ENCODE measurements at regions of chr1 and their contacts with region 1.

Region 1: DNA sequence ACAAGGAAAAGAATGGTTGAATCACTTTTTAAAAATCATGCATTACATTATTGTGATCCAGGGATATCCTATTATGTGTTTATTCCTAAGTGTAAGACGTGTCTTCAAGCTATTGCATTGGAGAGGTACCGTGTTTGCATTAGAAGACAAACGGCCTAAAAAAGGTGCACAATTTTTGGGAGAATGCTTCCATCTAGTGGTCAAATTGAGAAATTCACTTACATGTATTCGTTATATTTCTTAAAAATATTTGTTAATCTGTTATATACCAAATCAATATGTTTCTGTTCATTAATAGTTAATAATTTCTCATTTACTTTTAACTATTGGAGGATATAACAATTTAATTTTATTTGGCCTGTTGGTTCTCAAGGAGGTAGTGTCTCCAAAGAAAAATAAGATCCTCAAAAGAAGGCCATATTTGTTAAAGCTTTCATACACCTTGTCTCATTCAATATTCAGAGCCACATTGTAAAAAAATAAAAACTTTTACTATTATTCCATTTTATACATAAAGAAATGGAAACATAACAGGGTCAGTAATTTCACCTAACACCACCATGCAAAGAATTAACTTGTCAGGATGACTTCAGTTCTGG is 40.5 kb upstream of the KCTD3 start:
- DNase-seq: peak; percentile 69
- ATAC-seq: peak; percentile 63; the same call in 1 of the 2 replicates
- H3K4me3 ChIP-seq: no peak overlapping the region
- H3K27ac ChIP-seq: no peak overlapping the region
- H3K4me1 ChIP-seq: peaks cover 3% of the 10 kb centered on the region
- H3K27me3 ChIP-seq: no peaks in the 10 kb centered on the region
- CTCF ChIP-seq: peak; percentile 70
- POLR2A ChIP-seq: no peak
- RAD21 ChIP-seq: peak; percentile 82

Region 2: DNA sequence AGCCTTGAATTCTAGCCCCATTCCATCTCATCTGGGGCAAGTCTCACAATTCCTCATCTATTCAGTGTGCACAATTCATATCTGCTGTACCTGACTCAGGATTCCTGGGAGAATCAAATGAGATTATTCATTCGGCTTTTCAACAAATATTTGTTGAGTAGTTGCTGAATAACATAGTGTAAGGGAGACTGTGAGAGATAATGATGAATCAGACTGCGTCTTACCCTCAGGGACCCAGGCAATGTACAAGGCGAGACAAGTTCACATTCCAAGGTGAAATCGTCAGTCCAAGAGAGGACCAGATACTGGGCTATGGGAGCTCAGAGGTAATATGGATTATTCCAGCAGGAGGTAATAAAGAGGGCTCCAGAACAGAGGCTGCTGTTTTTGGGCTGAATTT is 1313.5 kb before region 1 on chr1:
- CTCF ChIA-PET with region 1: interaction called, 3 read pairs
- POLR2A ChIA-PET with region 1: no interaction called
- dilution Hi-C with region 1: no loop called
- in situ Hi-C with region 1: no loop called
- intact Hi-C with region 1: loop called (anchors 5 kb)
- DNase-seq: peak; percentile 18
- ATAC-seq: peak; percentile 48
- H3K4me3 ChIP-seq: no peak overlapping the region
- H3K27ac ChIP-seq: no peak overlapping the region
- H3K4me1 ChIP-seq: no peaks in the 10 kb centered on the region; the same call in 1 of the 2 replicates
- H3K27me3 ChIP-seq: peaks cover 38% of the 10 kb centered on the region
- CTCF ChIP-seq: no peak
- POLR2A ChIP-seq: no peak
- RAD21 ChIP-seq: no peak

Region 3: DNA sequence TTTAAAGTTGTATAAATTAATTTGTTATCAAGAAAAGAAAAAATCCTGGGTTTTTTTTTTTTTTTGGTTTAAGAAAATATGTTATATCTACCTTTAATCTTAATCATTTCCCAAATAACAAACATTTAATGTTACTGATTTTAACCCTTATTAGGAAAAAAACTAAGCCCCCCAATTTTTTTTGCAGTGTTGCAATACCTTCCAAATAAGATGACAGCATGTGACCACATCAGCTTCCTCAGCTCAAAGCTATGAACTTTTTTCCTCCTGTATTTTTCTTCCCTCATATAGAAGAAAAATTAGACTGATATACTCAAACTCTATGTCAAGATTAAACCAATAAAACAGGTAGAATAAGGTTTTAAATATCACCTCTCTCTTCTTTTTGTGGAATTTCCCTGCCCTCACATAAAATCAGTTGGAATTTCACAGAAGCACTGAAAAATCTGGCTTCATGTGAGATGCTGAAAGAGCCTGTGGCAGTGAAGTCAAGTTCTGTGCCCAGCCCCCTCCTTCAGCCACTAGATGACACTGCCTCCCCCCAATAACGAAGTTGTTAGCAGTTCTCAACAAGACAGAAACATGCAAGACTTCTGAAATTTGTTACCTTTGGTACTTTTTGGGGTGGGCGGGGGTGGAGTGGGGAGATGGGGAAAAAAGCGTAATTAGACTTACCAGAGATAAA is 1255.3 kb before region 1 on chr1:
- CTCF ChIA-PET with region 1: no interaction called
- POLR2A ChIA-PET with region 1: no interaction called
- dilution Hi-C with region 1: no loop called
- in situ Hi-C with region 1: no loop called
- intact Hi-C with region 1: no loop called
- DNase-seq: no peak
- ATAC-seq: no peak
- H3K4me3 ChIP-seq: no peak overlapping the region
- H3K27ac ChIP-seq: no peak overlapping the region
- H3K4me1 ChIP-seq: no peaks in the 10 kb centered on the region
- H3K27me3 ChIP-seq: peaks cover 10% of the 10 kb centered on the region
- CTCF ChIP-seq: no peak
- POLR2A ChIP-seq: no peak
- RAD21 ChIP-seq: no peak

Region 4: GRCh38 chr1:214632091-214632490 is 894.6 kb before region 1 on chr1:
- CTCF ChIA-PET with region 1: interaction called, 5 read pairs
- POLR2A ChIA-PET with region 1: no interaction called
- dilution Hi-C with region 1: no loop called
- in situ Hi-C with region 1: no loop called
- intact Hi-C with region 1: loop called (anchors 1 kb)
- DNase-seq: no peak
- ATAC-seq: no peak
- H3K4me3 ChIP-seq: no peak overlapping the region
- H3K27ac ChIP-seq: no peak overlapping the region
- H3K4me1 ChIP-seq: no peaks in the 10 kb centered on the region
- H3K27me3 ChIP-seq: no peaks in the 10 kb centered on the region
- CTCF ChIP-seq: no peak
- POLR2A ChIP-seq: no peak
- RAD21 ChIP-seq: no peak

Region 5: DNA sequence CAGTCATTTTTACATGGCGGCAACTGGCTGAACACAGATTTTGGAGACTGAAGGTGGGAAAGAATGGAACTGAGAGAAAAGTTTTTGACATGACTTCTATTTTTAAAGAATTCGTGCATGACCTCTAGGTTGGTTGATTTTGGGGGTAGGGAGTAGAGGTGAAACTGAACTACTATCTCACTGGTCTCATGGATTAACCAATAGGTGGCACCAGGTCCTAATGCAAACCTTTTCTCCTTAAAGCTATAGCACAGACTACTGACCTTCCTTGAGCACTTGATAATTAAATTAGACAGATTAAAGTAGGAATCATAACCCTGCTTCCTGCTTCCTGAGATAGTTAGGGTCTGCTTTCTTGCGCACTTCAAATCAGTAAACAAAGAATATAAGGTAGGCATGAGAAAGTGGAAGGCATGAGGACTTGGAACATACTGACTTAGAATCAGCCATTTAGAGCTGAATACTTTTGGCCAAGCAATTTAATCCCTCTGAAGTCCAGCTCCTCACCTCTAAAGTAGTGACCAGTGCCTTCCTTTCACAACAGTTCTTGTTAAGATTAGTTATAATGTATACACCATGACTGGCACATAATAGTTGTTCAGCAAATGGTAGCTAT is 717.7 kb before region 1 on chr1:
- CTCF ChIA-PET with region 1: interaction called, 4 read pairs
- POLR2A ChIA-PET with region 1: no interaction called
- dilution Hi-C with region 1: no loop called
- in situ Hi-C with region 1: no loop called
- intact Hi-C with region 1: loop called (anchors 2 kb)
- DNase-seq: peak; percentile 62
- ATAC-seq: peak; percentile 74
- H3K4me3 ChIP-seq: no peak overlapping the region
- H3K27ac ChIP-seq: no peak overlapping the region
- H3K4me1 ChIP-seq: peaks cover 1% of the 10 kb centered on the region; the same call in 1 of the 2 replicates
- H3K27me3 ChIP-seq: no peaks in the 10 kb centered on the region
- CTCF ChIP-seq: peak; percentile 57
- POLR2A ChIP-seq: no peak
- RAD21 ChIP-seq: peak; percentile 80

Region 6: DNA sequence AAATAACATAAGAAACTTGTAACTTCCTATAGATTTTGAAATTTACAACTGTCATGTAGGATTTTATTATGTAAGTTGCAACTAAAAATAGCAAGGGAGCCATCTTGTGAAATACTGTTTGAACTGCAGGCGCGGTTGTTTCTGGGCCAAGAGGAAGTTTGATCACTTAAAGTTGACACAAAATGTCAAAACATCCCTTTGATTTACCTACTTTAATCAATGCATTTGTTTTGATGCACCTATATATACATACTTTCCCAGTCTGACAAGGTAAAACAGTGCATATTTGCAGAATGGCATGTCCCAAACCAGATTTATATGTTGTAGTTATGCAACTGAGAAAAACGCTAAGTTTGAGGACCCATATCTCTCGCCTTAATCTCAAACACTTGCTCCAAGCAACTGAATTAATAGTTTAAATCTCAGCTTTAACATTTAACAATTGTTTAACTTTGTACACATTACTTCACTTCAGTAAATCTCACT is 380.3 kb before region 1 on chr1:
- CTCF ChIA-PET with region 1: no interaction called
- POLR2A ChIA-PET with region 1: no interaction called
- dilution Hi-C with region 1: no loop called
- in situ Hi-C with region 1: no loop called
- intact Hi-C with region 1: loop called (anchors 2 kb)
- DNase-seq: peak; percentile 64
- ATAC-seq: no peak
- H3K4me3 ChIP-seq: no peak overlapping the region
- H3K27ac ChIP-seq: no peak overlapping the region
- H3K4me1 ChIP-seq: no peaks in the 10 kb centered on the region
- H3K27me3 ChIP-seq: no peaks in the 10 kb centered on the region
- CTCF ChIP-seq: peak; percentile 74
- POLR2A ChIP-seq: no peak
- RAD21 ChIP-seq: peak; percentile 76

Region 7: DNA sequence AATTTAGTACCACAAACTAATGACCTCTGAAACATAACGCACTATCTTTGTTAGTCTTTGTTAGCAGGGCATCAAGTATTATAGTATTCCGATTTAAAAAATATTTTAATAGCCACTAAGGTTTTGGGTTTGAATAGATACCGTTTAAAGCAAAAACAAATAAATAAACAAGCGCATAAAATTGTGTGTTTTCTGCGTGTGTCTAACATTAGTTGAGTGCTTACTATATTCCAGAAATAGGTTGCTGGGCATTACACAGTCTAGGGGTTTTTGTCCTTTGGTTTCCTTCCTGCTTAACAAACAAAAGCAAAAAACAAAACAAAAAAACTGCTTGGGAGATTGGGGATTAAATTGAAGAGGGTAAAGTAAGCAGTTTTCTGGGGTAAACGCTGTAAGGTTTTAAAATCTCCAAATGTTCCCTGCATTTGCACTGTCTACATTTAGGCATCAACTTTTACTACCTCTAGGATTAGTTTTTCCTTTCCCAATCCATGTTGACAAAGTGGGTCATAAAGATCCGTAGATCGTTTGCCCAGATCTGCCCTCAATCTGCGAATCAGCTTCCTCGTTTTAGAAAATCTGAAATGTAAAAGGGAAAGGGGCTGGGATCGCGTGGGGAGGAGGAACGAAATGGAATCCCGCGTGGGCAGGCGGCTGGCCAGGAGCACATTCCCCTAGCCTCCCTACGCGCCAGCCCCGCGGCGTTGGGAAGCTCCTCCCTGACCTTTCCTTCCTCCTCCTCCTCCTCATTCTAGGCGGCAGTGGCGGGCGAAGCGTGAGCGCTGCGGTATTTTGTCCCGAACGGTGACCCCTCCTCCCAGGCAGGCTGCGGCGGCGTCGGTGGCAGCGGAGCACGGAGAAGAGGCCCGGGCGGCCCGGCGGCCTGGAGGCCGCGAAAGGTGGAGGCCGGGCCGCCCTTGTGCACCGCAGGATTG is 40.2 kb after region 1 on chr1 and contains the start of gene KCTD3:
- CTCF ChIA-PET with region 1: no interaction called
- POLR2A ChIA-PET with region 1: no interaction called
- dilution Hi-C with region 1: no loop called
- in situ Hi-C with region 1: no loop called
- intact Hi-C with region 1: no loop called
- DNase-seq: peak; percentile 61
- ATAC-seq: peak; percentile 87
- H3K4me3 ChIP-seq: peak within 1 kb of the TSS; percentile 84
- H3K27ac ChIP-seq: peak within 1 kb of the TSS; percentile 87
- H3K4me1 ChIP-seq: peaks cover 4% of the 10 kb centered on the region
- H3K27me3 ChIP-seq: no peaks in the 10 kb centered on the region
- CTCF ChIP-seq: no peak
- POLR2A ChIP-seq: no peak
- RAD21 ChIP-seq: no peak
- total RNA-seq, gene KCTD3: 49.5 and 51.7 TPM in 2 replicates

Region 8: DNA sequence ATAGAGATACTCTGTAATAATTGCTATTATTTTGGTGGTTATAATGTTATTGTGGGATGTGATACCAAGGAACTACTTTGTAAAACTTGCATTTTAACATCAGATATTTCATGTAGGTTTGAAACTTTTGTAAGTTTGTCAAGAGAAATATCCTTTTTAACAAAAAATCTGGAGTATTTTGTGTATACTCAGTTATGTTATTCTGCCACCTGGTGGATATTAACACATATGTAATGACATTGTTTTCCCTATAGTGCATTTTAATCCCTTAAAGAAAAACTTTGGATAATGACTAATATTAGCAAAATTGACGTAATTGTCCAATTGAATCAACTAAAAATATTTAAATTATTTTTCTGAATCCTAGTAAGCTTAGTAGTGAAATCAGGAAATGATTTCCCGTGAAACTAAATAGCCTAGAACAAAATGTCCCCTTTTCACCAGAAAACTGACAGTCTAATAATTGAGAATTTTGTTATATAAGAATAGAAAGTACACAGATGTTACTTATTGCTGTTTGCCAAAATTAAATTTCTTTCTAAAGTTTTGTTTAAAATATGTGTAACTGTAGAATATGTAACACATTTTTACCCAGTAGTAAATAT is 80.0 kb after region 1 on chr1:
- CTCF ChIA-PET with region 1: interaction called, 3 read pairs
- POLR2A ChIA-PET with region 1: no interaction called
- dilution Hi-C with region 1: no loop called
- in situ Hi-C with region 1: no loop called
- intact Hi-C with region 1: loop called (anchors 2 kb)
- DNase-seq: peak; percentile 42
- ATAC-seq: no peak
- H3K4me3 ChIP-seq: no peak overlapping the region
- H3K27ac ChIP-seq: no peak overlapping the region
- H3K4me1 ChIP-seq: peaks cover 7% of the 10 kb centered on the region
- H3K27me3 ChIP-seq: no peaks in the 10 kb centered on the region
- CTCF ChIP-seq: peak; percentile 49
- POLR2A ChIP-seq: no peak
- RAD21 ChIP-seq: peak; percentile 47

Measured in IMR-90 (cell line).